PC-9 (cell line): ENCODE measurements at regions of chr20 and their contacts with region 1.

Region 1: GRCh38 chr20:36447101-36447500 is 94.2 kb upstream of the MYL9 start:
- DNase-seq: peak; percentile 79 to 80
- H3K4me3 ChIP-seq: no peak overlapping the region
- H3K27ac ChIP-seq: no peak overlapping the region
- H3K4me1 ChIP-seq: peaks cover 12% of the 10 kb centered on the region
- H3K27me3 ChIP-seq: no peaks in the 10 kb centered on the region
- CTCF ChIP-seq: no peak

Region 2: DNA sequence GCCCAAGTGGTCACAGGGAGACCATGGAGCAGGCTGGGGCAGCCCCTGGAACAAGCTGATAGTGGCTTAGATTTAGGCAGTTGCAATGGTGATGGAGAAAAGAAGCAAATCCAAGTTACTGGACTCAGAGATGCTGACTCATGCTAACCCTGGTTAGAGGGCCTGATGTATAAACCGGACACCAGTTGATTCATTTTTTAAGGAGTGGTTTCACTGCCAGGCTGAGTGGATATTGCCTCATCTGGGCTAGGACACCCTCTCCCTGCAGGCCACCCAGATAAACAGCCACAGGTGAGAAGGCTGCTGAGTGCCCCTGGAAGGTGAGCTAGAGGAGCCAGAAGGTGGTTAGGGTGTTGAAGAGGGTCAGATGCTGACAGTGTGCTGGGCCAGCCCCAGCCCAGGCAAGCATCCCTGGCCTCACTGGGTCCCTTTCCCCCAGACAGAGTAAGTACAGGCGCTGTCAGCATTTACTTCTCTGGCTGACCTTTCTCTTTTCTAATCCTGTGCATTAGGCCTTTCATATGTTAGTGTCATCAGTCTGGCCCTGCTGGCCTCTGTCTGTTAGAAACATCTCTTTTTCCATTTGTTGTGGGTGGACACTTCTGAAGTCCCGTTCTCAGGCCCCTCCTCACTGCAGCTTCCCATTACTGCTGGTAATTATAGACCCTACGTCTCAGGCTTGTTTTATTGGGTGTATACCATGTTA is 279.1 kb before region 1 on chr20:
- CTCF ChIA-PET with region 1: interaction called, 12 read pairs
- POLR2A ChIA-PET with region 1: no interaction called
- intact Hi-C with region 1: no loop called
- DNase-seq: peak; percentile 41 to 79
- H3K4me3 ChIP-seq: no peak overlapping the region
- H3K27ac ChIP-seq: peak overlapping the region; percentile 70
- H3K4me1 ChIP-seq: peaks cover 42% of the 10 kb centered on the region
- H3K27me3 ChIP-seq: no peaks in the 10 kb centered on the region
- CTCF ChIP-seq: no peak

Region 3: DNA sequence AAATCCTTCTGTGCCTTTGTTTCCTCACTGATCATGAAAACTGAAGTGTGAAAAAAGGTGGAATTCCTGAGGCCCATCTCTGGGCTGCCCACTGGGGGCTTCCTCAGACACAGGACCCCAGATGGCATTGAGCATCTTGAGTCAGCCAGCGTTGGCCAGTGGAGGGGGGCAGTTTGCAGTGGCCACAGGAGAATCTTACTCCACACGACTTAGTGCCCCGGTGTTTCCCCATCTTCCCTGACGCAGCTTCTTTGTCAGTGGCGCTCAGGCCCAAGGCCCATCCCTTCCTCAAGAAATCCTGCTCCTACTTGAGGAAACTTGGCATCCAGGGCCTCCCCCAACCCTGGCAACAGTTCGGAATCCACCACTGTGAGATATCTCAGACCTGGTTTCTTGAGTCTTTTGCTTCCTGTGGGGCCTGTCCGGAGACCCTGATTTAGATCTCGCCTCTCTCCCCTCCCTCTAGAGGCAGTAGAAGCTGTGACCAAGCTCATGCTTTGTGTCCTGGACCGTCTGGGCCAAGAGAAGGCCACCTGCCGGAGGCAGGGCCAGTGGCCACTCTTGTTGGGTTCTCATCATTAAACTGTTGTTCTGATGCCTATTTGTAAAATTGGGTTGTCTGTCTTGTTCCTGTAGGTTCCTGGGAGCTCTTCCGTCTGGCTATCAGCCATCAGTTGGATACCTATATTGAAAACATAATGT is 161.2 kb before region 1 on chr20:
- CTCF ChIA-PET with region 1: no interaction called
- POLR2A ChIA-PET with region 1: no interaction called
- intact Hi-C with region 1: no loop called
- DNase-seq: no peak
- H3K4me3 ChIP-seq: no peak overlapping the region
- H3K27ac ChIP-seq: no peak overlapping the region
- H3K4me1 ChIP-seq: no peaks in the 10 kb centered on the region
- H3K27me3 ChIP-seq: peaks cover 82% of the 10 kb centered on the region
- CTCF ChIP-seq: no peak

Region 4: DNA sequence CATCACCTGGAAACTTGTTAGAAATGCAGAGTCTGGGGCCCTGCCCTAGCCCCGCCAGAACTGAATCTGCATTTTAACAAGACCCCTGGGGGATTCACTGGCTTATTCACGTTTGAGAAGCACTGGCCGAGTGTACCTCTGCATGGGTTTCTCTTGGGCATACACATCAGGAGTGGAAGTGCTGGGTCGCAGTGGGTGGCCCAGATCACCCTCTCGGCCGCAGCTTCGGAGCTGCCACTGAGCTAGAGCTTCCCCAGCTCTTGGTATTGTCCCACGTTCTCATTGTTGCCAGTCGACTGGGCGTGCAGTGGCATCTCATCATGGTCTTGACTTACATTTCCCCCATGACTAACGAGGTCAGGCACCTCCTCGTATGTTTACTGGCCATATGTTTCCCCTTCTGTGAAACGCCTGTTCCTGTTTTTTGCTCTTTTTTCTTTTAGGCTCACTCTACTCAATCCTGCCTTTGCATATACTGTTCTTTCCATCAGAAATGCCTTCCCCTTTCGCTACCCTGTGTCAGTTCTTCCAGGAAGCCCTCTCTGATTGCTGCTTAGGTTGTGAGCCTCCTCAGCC is 144.0 kb before region 1 on chr20:
- CTCF ChIA-PET with region 1: no interaction called
- POLR2A ChIA-PET with region 1: interaction called, 10 read pairs
- intact Hi-C with region 1: no loop called
- DNase-seq: no peak
- H3K4me3 ChIP-seq: no peak overlapping the region
- H3K27ac ChIP-seq: no peak overlapping the region
- H3K4me1 ChIP-seq: no peaks in the 10 kb centered on the region
- H3K27me3 ChIP-seq: peaks cover 57% of the 10 kb centered on the region
- CTCF ChIP-seq: no peak